Dorsolateral prefrontal cortex (tissue), 120 donors: ENCODE measurements at regions of chr11 and their contacts with region 1.

Region 1: GRCh38 chr11:20243974-20244373 is 83.7 kb upstream of the DBX1 start:
- DNase-seq: no peak
- H3K4me3 ChIP-seq: no peak overlapping the region
- H3K27ac ChIP-seq: no peak overlapping the region
- H3K27me3 ChIP-seq: peaks cover 0 to 14% (median 0%) of the 10 kb centered on the region in 45 donors
- CTCF ChIP-seq: peak in 30 of 56 donors; percentile 4 to 49 (median 26)

Region 2: DNA sequence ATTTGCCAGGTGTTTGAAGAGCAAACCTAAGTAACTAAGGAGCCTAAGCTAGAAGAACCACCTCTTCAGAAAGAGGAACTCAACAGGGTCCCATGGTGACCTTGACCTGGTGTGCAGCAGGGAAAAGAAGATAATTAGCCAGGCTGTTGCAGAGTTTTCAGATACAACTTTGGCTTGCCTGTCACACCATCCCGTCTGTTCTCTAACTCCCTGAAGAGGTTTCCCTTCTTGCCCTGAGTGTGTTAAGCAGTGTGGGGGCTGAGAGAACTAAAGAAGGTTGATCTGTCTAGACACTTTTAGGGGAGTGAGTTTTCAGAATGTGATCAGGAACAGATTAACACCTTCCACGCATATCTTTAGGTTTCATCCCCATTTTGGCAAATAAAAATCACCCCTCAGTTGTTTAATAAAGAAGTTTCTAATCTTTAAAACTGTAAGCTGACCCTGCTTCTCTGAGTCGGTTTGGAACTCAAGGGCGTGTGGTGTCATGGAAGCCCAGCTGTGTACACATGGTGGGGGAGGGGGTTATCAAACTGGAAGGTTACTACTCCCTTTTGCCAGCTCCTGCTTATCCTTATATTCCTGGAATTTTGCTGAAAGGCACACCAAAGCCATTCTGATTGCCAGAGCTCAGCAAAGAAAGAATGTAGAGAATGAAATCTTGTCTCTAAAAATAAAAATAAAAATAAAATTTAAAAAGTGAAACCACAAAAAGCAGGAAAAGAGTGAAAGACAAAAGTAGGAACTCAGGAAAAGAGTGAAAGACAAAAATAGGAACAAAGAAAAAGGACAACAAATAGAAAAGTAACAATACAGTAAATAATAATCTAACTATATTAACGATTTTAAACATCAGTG is 153.9 kb before region 1 on chr11:
- intact Hi-C with region 1: no loop called
- DNase-seq: no peak
- H3K4me3 ChIP-seq: no peak overlapping the region
- H3K27ac ChIP-seq: peak overlapping the region in 39 of 59 donors; percentile 1 to 74 (median 49)
- H3K27me3 ChIP-seq: no peaks in the 10 kb centered on the region
- CTCF ChIP-seq: no peak

Region 3: GRCh38 chr11:20337526-20338154 is 93.7 kb after region 1 on chr11:
- intact Hi-C with region 1: loop called in 1 of 2 experiments (anchors 5 kb)
- DNase-seq: peak in 1 of 10 donors; percentile 38
- H3K4me3 ChIP-seq: no peak overlapping the region
- H3K27ac ChIP-seq: no peak overlapping the region
- H3K27me3 ChIP-seq: peaks cover 0 to 49% (median 11%) of the 10 kb centered on the region in 45 donors
- CTCF ChIP-seq: peak in 55 of 56 donors; percentile 20 to 79 (median 58)